Activated B cell treated with CpG ODN at 0.5 μM for 24 hours (primary cell): ENCODE measurements at regions of chr1 and their contacts with region 1.

Region 1: DNA sequence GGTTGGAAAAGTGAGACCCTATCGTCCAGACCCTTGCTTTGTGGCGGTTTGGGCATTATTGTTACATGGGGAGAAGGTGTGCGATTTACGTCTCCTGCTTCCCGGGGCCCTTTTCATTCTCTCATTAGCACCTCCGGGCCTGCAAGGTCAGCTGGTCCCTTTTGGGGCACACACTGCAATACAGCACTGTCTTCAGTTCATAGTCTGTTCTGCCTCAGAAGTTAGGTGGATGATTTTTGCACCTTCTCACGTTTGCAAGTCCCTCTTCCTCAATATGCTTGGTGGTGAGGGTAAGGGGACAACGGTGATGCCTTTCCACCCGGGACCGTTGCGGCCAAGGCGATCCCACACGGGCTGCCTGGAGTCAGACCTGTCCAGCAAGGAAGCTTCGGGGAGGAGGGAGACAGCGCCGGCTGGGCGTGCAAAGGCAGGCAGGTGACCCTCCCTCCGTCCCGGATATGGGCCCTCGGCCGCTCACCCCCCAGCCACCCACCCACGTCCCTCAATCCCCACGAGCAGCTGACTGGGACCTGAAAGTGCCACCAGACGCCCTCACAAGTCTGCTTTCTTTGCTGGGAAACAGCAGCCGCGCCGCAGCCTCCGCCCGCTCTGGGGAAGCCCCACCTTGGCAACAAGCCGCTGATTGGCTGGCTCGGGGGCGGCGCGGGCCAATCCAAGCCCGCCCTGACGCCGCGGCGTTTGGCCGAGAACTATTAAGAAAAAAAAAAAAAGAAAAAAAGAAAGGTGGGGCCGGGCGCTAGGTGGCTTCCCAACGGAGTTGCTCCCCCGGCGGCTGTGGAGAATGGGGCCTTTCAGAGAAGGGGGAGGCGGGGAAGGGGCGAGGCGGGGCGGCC is 21.7 kb downstream of the BTG2 start:
- DNase-seq: peak; percentile 91
- ATAC-seq: peak; percentile 79
- H3K4me3 Mint-ChIP-seq: peak overlapping the region; percentile 84
- H3K27ac Mint-ChIP-seq: peak overlapping the region; percentile 96
- H3K4me1 Mint-ChIP-seq: peaks cover 77% of the 10 kb centered on the region
- H3K27me3 Mint-ChIP-seq: no peaks in the 10 kb centered on the region
- CTCF ChIP-seq: no peak

Region 2: GRCh38 chr1:203026031-203026989 is 300.7 kb before region 1 on chr1 and contains the start of gene PPFIA4:
- CTCF ChIA-PET with region 1: no interaction called
- POLR2A ChIA-PET with region 1: no interaction called
- intact Hi-C with region 1: loop called (anchors 5 kb)
- DNase-seq: peak; percentile 87
- ATAC-seq: peak; percentile 97
- H3K4me3 Mint-ChIP-seq: peak within 1 kb of the TSS; percentile 73
- H3K27ac Mint-ChIP-seq: peak within 1 kb of the TSS; percentile 72
- H3K4me1 Mint-ChIP-seq: peaks cover 16% of the 10 kb centered on the region
- H3K27me3 Mint-ChIP-seq: peaks cover 3% of the 10 kb centered on the region
- CTCF ChIP-seq: no peak
- total RNA-seq, gene PPFIA4: 0.12 and 0.29 TPM in 2 replicates

Region 3: DNA sequence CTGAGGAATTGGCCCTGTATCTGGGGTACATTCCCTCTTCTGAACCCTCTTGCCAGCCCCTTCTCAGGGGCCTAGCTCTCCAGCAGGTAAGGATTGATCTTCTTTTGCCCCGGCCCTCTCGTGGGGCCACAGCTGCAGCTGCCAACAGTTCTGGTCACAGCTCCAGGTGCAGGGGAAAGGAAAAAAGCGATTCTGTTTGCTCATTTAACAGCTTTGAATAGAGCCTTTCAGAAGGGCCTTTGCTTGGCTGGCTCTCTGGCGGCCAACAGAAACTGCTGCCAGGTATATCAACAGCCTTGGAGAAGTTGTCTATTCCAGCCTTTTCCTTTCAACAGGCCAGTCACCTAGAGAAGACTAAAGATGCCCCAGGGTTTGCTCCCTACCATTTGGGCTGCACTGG is 40.0 kb after region 1 on chr1:
- CTCF ChIA-PET with region 1: no interaction called
- POLR2A ChIA-PET with region 1: no interaction called
- intact Hi-C with region 1: no loop called
- DNase-seq: no peak
- ATAC-seq: no peak
- H3K4me3 Mint-ChIP-seq: no peak overlapping the region
- H3K27ac Mint-ChIP-seq: no peak overlapping the region
- H3K4me1 Mint-ChIP-seq: peaks cover 8% of the 10 kb centered on the region
- H3K27me3 Mint-ChIP-seq: no peaks in the 10 kb centered on the region
- CTCF ChIP-seq: no peak